ENCODE measurements at regions of chr10 and their contacts with region 1.

Region 1: DNA sequence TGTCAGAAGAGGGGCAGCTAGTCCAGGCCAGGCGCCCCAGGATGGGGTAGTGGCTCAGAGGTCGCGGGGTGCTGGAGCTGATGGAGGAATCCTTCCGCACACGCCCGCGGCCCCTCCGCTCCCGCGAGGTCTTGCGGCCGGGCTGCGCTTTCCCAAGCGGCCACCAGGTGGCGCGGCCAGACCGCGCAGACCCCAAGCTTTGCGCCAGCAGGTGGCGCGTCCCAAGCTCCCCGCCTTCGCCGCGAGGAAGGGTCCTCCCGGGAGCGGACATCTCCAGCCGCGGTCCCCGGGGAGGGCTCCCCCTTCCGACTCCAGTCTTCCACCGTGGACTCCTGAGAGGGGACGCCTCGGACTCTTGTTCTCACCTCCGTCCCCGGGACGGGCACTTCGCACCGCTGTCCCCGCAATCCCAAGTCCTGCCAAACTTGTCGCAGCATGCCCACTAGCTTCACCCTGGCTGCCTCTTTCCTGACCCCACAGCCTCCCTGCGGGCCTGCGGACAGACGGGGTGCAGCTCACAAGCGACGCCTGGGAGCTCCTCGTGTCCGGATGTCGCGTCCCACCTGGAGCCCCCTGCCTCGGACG is 19.4 kb downstream of the KCNK18 start:
- H3K4me3 ChIP-seq: peak overlapping the region; percentile 34
- H3K27ac ChIP-seq: peak overlapping the region; percentile 34; the same call in 1 of the 2 replicates
- H3K4me1 ChIP-seq: peaks cover 3% of the 10 kb centered on the region; the same call in 1 of the 2 replicates
- CTCF ChIP-seq: peak; percentile 100

Region 2: DNA sequence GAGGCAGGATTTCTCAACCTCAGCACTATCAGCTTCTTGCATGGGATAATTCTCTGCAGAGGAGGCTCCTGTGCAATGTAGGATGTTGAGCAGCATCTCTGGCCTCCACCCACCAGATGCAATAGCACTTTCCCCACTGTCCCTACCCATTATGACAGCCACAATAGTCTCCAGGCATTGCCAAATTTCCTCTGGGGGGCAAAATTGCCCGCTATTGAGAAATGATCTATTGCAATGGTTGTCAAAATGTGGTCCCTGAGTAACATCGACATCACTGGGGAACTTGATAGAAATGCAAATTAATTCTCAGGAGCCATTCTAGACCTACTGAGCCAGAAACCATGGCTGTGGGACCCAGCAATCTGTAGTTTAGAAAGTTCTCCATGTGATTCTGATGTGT is 12.4 kb before region 1 on chr10:
- CTCF ChIA-PET with region 1: interaction called, 26 read pairs
- POLR2A ChIA-PET with region 1: no interaction called
- H3K4me3 ChIP-seq: no peak overlapping the region
- H3K27ac ChIP-seq: no peak overlapping the region
- H3K4me1 ChIP-seq: no peaks in the 10 kb centered on the region
- CTCF ChIP-seq: no peak

Region 3: GRCh38 chr10:117312430-117312829 is 95.7 kb after region 1 on chr10:
- CTCF ChIA-PET with region 1: interaction called, 142 read pairs
- POLR2A ChIA-PET with region 1: no interaction called
- H3K4me3 ChIP-seq: no peak overlapping the region
- H3K27ac ChIP-seq: no peak overlapping the region
- H3K4me1 ChIP-seq: no peaks in the 10 kb centered on the region
- CTCF ChIP-seq: no peak

Region 4: DNA sequence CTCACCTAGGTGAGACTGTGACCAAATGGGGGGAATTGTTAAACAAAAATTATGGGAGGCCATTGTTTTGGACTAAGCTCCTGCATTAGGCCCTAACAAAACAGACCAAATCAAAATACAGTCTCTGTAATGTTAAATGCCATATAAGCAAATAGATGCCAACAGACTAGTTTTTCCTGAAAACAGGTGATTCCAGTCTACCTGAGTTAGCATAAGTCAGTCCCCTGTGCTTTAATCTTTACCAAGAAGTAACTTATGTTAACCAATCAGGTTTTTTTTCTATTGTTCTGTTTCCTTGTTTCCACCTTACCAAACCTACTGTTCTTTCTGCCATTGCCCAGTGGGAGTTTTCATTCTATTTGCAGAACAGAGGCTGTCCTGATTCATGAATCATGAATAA is 110.6 kb after region 1 on chr10:
- CTCF ChIA-PET with region 1: interaction called, 15 read pairs
- POLR2A ChIA-PET with region 1: no interaction called
- H3K4me3 ChIP-seq: no peak overlapping the region
- H3K27ac ChIP-seq: no peak overlapping the region
- H3K4me1 ChIP-seq: peaks cover 12% of the 10 kb centered on the region
- CTCF ChIP-seq: no peak

Measured in HEK293 (cell line).